ENCODE measurements at regions of chr6 and their contacts with region 1.

Region 1: DNA sequence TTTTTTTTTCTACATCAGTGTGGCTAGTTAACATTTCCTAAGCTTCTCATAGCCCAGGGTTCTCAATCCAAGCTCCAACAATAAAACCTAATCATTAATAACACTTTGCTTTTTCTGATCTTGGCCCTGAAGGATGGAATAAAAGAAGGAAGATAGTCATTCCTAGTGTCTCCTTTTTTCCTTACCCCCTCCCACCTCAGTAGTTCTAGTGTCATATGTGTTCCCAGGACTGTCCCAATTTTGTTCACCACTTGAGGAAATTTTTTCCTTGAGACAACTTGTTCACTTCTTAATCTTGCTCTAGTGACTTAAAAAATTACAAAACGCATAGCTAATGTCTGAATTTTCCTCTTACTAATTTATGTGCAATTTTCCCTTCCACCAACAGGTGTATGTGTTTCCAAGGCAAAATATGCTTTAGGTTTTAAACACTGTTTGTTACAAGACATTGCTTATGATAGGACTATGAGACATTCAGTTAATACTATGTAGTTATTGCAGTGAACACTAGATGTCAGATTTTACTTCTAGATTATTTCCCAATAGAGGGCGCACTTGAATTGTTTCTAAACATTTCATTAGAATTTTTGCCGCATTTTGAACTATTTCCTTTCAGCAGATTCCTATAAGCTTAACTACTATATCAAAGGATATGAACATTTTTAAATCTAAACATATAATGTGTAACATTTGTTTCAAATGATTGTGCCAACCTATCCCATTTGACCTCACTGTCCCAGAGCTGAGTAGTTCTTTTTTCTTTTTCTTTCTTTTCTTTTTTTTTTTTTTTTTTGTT is 18.5 kb upstream of the C6orf141 start:
- DNase-seq: no peak
- H3K4me3 ChIP-seq: peak overlapping the region in 2 of 4 donors; percentile 3 to 18
- H3K27ac ChIP-seq: no peak overlapping the region
- H3K4me1 ChIP-seq: no peaks in the 10 kb centered on the region
- H3K27me3 ChIP-seq: no peaks in the 10 kb centered on the region
- CTCF ChIP-seq: peak; percentile 64 to 71 (median 68)
- EP300 ChIP-seq: no peak
- POLR2A ChIP-seq: no peak

Region 2: DNA sequence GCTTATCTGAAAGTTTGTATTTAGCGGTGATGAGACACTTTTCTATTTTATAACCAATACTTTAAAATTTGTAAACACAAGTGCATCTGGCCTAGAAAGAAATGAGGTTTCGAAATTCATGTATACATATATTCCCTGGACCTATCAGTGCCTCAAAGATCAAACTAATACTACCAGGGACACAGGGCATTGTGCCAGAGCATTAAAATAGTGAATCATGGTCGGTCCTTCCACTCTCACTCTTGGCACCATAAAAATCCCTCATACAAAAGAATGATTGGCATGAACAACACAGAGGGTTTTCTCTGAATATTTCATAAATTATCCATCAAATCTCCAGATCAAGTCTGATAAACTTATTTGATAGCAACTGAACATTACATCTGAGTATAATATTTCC is 130.9 kb before region 1 on chr6:
- intact Hi-C with region 1: no loop called
- DNase-seq: no peak
- H3K4me3 ChIP-seq: no peak overlapping the region
- H3K27ac ChIP-seq: no peak overlapping the region
- H3K4me1 ChIP-seq: no peaks in the 10 kb centered on the region
- H3K27me3 ChIP-seq: no peaks in the 10 kb centered on the region
- CTCF ChIP-seq: no peak
- EP300 ChIP-seq: no peak
- POLR2A ChIP-seq: no peak

Region 3: DNA sequence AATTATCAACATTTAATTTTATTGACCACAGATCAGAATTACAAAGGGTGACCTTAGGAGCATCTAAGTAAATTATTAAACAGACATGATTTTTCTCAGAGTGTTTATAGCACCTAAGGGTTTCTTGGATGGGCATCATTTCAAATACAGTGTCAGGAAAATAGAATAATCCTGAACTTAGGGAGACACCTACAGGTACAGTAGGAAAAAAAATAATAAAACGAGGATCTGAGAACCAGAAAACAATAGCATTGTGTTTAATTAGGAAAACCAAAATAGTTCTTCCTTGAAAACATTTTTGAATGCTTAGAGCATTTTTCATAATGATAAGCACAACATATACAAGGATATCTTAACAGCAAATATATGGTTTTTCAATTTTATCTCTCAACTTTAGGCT is 108.2 kb before region 1 on chr6:
- intact Hi-C with region 1: no loop called
- DNase-seq: no peak
- H3K4me3 ChIP-seq: no peak overlapping the region
- H3K27ac ChIP-seq: no peak overlapping the region
- H3K4me1 ChIP-seq: no peaks in the 10 kb centered on the region
- H3K27me3 ChIP-seq: no peaks in the 10 kb centered on the region
- CTCF ChIP-seq: no peak
- EP300 ChIP-seq: no peak
- POLR2A ChIP-seq: no peak

Region 4: GRCh38 chr6:49606696-49607390 is 74.9 kb after region 1 on chr6:
- intact Hi-C with region 1: loop called (anchors 2 kb)
- DNase-seq: no peak
- H3K4me3 ChIP-seq: no peak overlapping the region
- H3K27ac ChIP-seq: no peak overlapping the region
- H3K4me1 ChIP-seq: peaks cover 0 to 5% (median 0%) of the 10 kb centered on the region in 4 donors
- H3K27me3 ChIP-seq: no peaks in the 10 kb centered on the region
- CTCF ChIP-seq: peak; percentile 74 to 88 (median 84)
- EP300 ChIP-seq: no peak
- POLR2A ChIP-seq: no peak

Region 5: DNA sequence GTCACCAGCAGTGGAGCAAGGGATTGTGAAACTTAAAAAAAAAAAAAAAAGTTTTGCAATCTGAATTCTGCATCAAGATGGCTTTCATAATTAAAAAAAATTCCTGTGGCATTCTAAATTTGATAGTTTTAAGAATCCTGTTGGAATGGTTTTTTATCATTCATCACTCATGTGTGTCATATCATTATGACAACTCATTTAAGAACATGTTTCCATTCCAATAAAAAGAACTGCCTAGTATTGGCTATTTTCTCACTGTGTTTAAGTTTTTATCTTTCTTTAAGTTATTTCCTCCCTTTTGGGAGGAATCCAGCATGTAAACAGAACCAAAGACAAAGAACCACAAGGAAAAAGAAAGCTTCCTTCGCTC is 130.9 kb after region 1 on chr6:
- intact Hi-C with region 1: no loop called
- DNase-seq: no peak
- H3K4me3 ChIP-seq: no peak overlapping the region
- H3K27ac ChIP-seq: no peak overlapping the region
- H3K4me1 ChIP-seq: no peaks in the 10 kb centered on the region
- H3K27me3 ChIP-seq: no peaks in the 10 kb centered on the region
- CTCF ChIP-seq: no peak
- EP300 ChIP-seq: no peak
- POLR2A ChIP-seq: no peak